Activated CD4-positive, alpha-beta memory T cell treated with anti-CD3 and anti-CD28 coated beads for 36 hours (primary cell): ENCODE measurements at regions of chr14 and their contacts with region 1.

Region 1: DNA sequence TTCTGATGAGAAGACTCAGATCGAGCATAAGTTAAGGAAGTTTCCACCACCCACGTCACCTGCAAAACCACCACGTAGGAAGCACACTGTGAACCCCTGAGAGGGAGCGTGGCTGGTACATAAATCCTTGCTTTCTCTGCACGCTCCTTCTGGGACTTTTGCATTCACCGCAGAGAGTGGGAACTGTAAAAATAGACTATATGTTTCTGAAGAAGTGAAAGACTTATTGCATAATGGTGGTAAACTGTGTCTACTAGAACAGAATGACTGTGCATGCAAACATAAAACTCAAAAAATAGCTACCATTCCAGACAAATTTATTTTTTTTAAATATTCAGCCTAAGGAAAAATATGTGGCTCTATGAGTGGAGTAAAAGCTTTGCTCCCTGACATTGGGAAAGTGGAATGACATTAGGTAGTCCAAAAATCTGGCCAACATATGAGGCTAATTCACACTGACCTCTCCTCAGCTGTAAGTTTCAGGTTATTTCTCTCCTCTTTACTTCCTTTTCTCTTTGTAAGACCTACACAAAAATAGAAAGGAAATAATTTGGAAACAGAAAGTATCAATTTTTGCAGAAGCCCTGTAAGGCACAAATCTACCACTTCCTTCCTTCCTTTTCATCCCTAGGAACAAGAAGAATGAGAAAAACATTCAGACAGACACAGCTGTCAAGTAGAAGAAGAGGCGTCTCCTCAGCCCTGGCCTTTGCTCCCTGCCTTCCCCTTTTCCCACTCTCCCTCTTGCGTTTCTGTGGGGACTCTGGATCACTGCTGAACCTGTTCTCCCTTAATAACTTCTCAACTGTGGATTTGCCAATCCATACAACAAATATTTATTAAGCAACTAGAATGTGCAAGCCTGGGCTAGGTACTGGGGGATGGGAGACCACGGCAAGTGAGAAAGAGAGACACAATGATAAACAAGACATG is 264.3 kb upstream of the FOXN3 start:
- DNase-seq: peak; percentile 82
- H3K4me3 Mint-ChIP-seq: peak overlapping the region; percentile 30
- H3K27ac Mint-ChIP-seq: peak overlapping the region; percentile 82
- H3K4me1 Mint-ChIP-seq: peaks cover 33% of the 10 kb centered on the region
- H3K27me3 Mint-ChIP-seq: no peaks in the 10 kb centered on the region

Region 2: GRCh38 chr14:89430391-89431236 is 250.7 kb before region 1 on chr14:
- CTCF ChIA-PET with region 1: no interaction called
- POLR2A ChIA-PET with region 1: no interaction called
- intact Hi-C with region 1: loop called (anchors 5 kb)
- DNase-seq: peak; percentile 75
- H3K4me3 Mint-ChIP-seq: peak overlapping the region; percentile 67
- H3K27ac Mint-ChIP-seq: peak overlapping the region; percentile 88
- H3K4me1 Mint-ChIP-seq: peaks cover 69% of the 10 kb centered on the region
- H3K27me3 Mint-ChIP-seq: no peaks in the 10 kb centered on the region

Region 3: DNA sequence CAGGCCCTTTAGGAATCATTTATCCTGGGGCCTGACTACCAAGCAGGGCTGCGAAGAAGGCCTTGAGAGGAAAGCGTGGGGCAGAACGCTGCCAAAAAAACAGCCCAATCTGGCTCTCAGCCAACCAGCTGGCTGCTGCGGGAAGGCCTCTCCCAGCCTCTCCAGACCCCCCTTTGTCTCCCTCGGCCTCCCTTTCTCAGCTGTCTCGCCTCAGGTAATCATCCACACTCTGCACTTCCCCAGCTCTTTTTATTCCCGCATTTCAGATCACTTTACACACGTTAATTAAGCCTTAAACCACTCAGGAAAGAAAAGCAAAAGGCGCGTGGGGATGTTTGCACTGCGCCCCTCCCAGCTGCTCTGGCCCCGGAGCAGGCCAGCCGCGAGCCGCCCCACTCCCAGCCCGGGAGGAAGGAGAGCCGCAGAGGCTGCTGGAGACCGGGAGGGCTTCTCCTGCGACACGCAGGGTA is 56.1 kb before region 1 on chr14:
- CTCF ChIA-PET with region 1: no interaction called
- POLR2A ChIA-PET with region 1: interaction called, 3 read pairs
- intact Hi-C with region 1: loop called (anchors 1 kb)
- DNase-seq: no peak
- H3K4me3 Mint-ChIP-seq: no peak overlapping the region
- H3K27ac Mint-ChIP-seq: peak overlapping the region; percentile 80
- H3K4me1 Mint-ChIP-seq: peaks cover 77% of the 10 kb centered on the region
- H3K27me3 Mint-ChIP-seq: no peaks in the 10 kb centered on the region

Region 4: DNA sequence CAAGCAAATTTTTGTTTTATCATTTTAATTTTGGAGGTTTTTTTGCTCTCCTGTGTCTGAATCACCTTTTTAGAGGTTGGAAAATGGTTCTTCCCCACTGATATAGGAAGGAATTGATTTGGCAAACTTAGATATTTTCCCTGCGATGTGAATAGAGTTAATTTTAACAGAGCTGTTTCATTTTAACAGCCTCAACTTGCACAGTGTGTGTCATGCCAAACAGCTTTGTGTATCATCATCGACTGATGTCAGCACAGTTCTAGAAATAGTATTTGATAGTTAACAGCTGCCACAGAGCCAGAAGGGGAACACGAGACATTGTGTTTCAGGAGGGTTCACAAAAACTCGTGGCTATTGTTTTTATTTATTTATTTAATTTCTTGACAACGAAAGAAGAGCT is 21.2 kb before region 1 on chr14:
- CTCF ChIA-PET with region 1: no interaction called
- POLR2A ChIA-PET with region 1: no interaction called
- intact Hi-C with region 1: no loop called
- DNase-seq: no peak
- H3K4me3 Mint-ChIP-seq: no peak overlapping the region
- H3K27ac Mint-ChIP-seq: no peak overlapping the region
- H3K4me1 Mint-ChIP-seq: peaks cover 2% of the 10 kb centered on the region
- H3K27me3 Mint-ChIP-seq: no peaks in the 10 kb centered on the region

Region 5: GRCh38 chr14:89701211-89702043 is 20.1 kb after region 1 on chr14:
- CTCF ChIA-PET with region 1: interaction called, 3 read pairs
- POLR2A ChIA-PET with region 1: no interaction called
- intact Hi-C with region 1: loop called (anchors 2 kb)
- DNase-seq: peak; percentile 89
- H3K4me3 Mint-ChIP-seq: peak overlapping the region; percentile 64
- H3K27ac Mint-ChIP-seq: peak overlapping the region; percentile 81
- H3K4me1 Mint-ChIP-seq: peaks cover 44% of the 10 kb centered on the region
- H3K27me3 Mint-ChIP-seq: no peaks in the 10 kb centered on the region

Region 6: GRCh38 chr14:89750281-89750755 is 69.0 kb after region 1 on chr14:
- CTCF ChIA-PET with region 1: no interaction called
- POLR2A ChIA-PET with region 1: interaction called, 6 read pairs
- intact Hi-C with region 1: loop called (anchors 1 kb)
- DNase-seq: no peak
- H3K4me3 Mint-ChIP-seq: no peak overlapping the region
- H3K27ac Mint-ChIP-seq: peak overlapping the region; percentile 70
- H3K4me1 Mint-ChIP-seq: peaks cover 45% of the 10 kb centered on the region
- H3K27me3 Mint-ChIP-seq: no peaks in the 10 kb centered on the region